IMR-90 (cell line): ENCODE measurements at regions of chr7 and their contacts with region 1.

Region 1: DNA sequence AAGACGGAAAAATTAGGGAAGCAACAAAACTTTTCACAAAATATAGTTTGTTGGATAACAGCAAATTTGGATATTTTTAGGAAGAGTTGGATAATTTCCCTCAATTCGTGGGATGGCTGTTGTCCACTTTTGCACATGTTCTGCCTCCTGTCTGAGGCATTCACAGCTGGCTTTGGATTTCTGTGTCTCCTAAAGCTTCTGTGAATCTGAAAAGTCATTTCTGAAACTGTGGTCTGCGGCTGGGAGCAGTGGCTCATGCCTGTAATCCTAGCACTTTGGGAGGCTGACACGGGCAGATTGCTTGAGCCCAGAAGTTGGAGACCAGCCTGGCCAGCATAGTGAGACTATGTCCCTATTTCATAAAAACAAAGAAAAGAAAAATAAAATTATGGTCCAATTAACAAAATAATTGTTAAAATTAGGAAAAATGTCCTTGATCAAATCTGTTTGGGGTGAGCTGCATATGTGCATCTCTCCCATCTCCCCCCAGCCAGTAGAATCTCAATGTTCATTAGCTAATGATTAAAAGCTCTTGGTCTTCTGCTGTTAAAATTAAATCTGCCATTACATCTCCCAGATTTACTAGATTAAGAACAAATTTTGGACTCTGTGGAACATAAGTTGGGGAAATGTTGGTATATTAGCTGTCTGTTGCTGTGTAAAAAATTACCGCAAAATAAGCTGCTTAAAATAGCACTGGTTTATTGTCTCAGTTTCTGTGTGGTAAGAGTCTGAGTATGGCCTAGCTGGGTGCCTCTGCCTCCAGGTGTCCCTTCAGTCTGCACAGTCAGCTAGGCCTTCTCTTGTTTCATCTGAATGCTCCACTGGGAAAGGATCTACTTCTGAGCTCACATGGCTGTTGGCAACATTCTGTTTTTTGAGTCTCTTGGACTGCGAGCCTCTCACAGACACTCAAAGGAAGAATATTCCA is 332.0 kb upstream of the FZD1 start:
- DNase-seq: no peak
- ATAC-seq: no peak
- H3K4me3 ChIP-seq: no peak overlapping the region
- H3K27ac ChIP-seq: no peak overlapping the region
- H3K4me1 ChIP-seq: no peaks in the 10 kb centered on the region
- H3K27me3 ChIP-seq: no peaks in the 10 kb centered on the region
- CTCF ChIP-seq: no peak
- POLR2A ChIP-seq: no peak
- RAD21 ChIP-seq: no peak

Region 2: GRCh38 chr7:90917539-90917938 is 14.7 kb before region 1 on chr7:
- CTCF ChIA-PET with region 1: no interaction called
- POLR2A ChIA-PET with region 1: no interaction called
- dilution Hi-C with region 1: no loop called
- in situ Hi-C with region 1: no loop called
- intact Hi-C with region 1: loop called (anchors 2 kb)
- DNase-seq: no peak
- ATAC-seq: no peak
- H3K4me3 ChIP-seq: no peak overlapping the region
- H3K27ac ChIP-seq: no peak overlapping the region
- H3K4me1 ChIP-seq: peaks cover 2% of the 10 kb centered on the region; the same call in 1 of the 2 replicates
- H3K27me3 ChIP-seq: no peaks in the 10 kb centered on the region
- CTCF ChIP-seq: no peak
- POLR2A ChIP-seq: no peak
- RAD21 ChIP-seq: no peak